ENCODE measurements at regions of chr9 and their contacts with region 1.

Region 1: GRCh38 chr9:76290555-76290954 is 103.7 kb downstream of the RFK start:
- DNase-seq: no peak
- ATAC-seq: no peak
- H3K4me3 ChIP-seq: no peak overlapping the region
- H3K27ac ChIP-seq: no peak overlapping the region
- H3K4me1 ChIP-seq: no peaks in the 10 kb centered on the region
- H3K27me3 ChIP-seq: no peaks in the 10 kb centered on the region
- CTCF ChIP-seq: no peak

Region 2: DNA sequence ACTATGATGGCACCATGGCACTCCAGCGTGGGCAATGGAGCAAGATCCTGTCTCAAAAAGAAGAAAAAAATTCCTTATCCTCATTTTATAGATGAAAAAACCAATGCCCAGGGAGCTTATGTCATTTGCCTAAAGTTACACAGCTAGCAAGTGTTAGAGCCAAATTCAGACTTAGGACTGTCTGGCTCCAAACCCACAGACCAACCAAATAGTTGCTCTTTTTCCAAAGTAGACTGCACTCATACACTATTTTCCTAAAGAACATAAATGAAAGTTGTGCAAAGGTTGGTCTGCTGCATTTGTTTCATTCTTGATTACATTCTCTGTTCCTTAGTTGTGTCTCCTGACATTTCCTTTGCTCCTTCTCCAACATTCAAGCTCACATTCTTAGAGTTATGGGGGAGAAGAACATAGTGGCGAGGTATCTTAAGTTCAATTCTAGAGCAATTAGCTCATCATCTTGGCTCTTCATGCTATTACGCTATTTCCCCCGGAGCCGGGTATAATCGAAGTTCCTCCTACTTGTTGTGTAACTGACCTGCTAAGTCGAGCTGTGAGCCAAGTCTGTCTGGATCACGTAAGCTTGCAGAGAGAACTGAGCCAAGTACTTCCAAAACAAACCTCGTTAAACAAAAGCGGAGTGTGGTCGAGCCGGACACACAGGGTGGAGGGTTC is 34.6 kb before region 1 on chr9:
- CTCF ChIA-PET with region 1: no interaction called
- POLR2A ChIA-PET with region 1: no interaction called
- in situ Hi-C with region 1: no loop called
- intact Hi-C with region 1: no loop called
- DNase-seq: no peak
- ATAC-seq: no peak
- H3K4me3 ChIP-seq: no peak overlapping the region
- H3K27ac ChIP-seq: no peak overlapping the region
- H3K4me1 ChIP-seq: no peaks in the 10 kb centered on the region
- H3K27me3 ChIP-seq: no peaks in the 10 kb centered on the region
- CTCF ChIP-seq: no peak

Region 3: GRCh38 chr9:76351006-76351405 is 60.5 kb after region 1 on chr9:
- CTCF ChIA-PET with region 1: no interaction called
- POLR2A ChIA-PET with region 1: interaction called, 11 read pairs
- in situ Hi-C with region 1: no loop called
- intact Hi-C with region 1: no loop called
- DNase-seq: no peak
- ATAC-seq: no peak
- H3K4me3 ChIP-seq: no peak overlapping the region
- H3K27ac ChIP-seq: no peak overlapping the region
- H3K4me1 ChIP-seq: no peaks in the 10 kb centered on the region
- H3K27me3 ChIP-seq: no peaks in the 10 kb centered on the region
- CTCF ChIP-seq: no peak

Measured in Panc1 (cell line).